A549 (cell line): ENCODE measurements at regions of chr14 and their contacts with region 1.

Region 1: GRCh38 chr14:64636208-64636979 is 67.8 kb upstream of the PLEKHG3 start:
- DNase-seq: peak; percentile 74 to 84
- ATAC-seq: peak; percentile 90 to 93
- H3K4me3 ChIP-seq: no peak overlapping the region
- H3K27ac ChIP-seq: peak overlapping the region; percentile 62 to 83
- H3K4me1 ChIP-seq: peaks cover 42% of the 10 kb centered on the region
- CTCF ChIP-seq: peak; percentile 93
- EP300 ChIP-seq: no peak
- POLR2A ChIP-seq: no peak
- RAD21 ChIP-seq: peak; percentile 83 to 94

Region 2: DNA sequence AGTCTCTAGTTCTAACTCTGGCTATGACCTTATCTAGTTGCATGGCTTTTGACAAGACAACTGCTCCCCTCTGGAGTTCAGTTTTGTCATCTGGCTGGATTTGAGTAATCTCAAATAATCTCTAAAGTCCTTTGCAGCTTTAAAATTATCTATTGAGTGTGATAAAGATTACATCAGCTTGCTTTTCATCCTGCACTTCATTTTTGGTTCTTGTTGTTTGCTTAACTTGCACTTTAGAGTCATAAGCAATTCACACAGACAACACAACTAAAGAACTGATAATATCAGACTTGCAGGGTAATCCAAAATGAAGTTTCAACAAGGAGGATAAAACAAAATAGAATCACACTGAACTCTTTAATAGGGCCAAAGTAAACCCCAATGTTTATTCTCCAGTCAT is 168.8 kb before region 1 on chr14:
- CTCF ChIA-PET with region 1: no interaction called
- POLR2A ChIA-PET with region 1: no interaction called
- DNase-seq: no peak
- ATAC-seq: no peak
- H3K4me3 ChIP-seq: no peak overlapping the region
- H3K27ac ChIP-seq: no peak overlapping the region
- H3K4me1 ChIP-seq: peaks cover 25% of the 10 kb centered on the region; the same call in 2 of the 3 replicates
- CTCF ChIP-seq: no peak
- EP300 ChIP-seq: no peak
- POLR2A ChIP-seq: no peak
- RAD21 ChIP-seq: no peak

Region 3: GRCh38 chr14:64510825-64511671 is 125.3 kb before region 1 on chr14:
- CTCF ChIA-PET with region 1: interaction called, 13 read pairs
- POLR2A ChIA-PET with region 1: no interaction called
- DNase-seq: peak; percentile 32 to 76
- ATAC-seq: peak; percentile 81 to 83; a peak in 5 of 6 replicates
- H3K4me3 ChIP-seq: no peak overlapping the region
- H3K27ac ChIP-seq: peak overlapping the region; percentile 34 to 71
- H3K4me1 ChIP-seq: peaks cover 75% of the 10 kb centered on the region
- CTCF ChIP-seq: peak; percentile 96
- EP300 ChIP-seq: no peak
- POLR2A ChIP-seq: no peak
- RAD21 ChIP-seq: peak; percentile 53

Region 4: GRCh38 chr14:64540208-64541157 is 95.9 kb before region 1 on chr14 and contains the start of gene HSPA2:
- CTCF ChIA-PET with region 1: interaction called, 182 read pairs
- POLR2A ChIA-PET with region 1: interaction called, 68 read pairs
- DNase-seq: peak; percentile 97 to 100
- ATAC-seq: peak; percentile 95 to 96
- H3K4me3 ChIP-seq: peak within 1 kb of the TSS; percentile 62
- H3K27ac ChIP-seq: peak within 1 kb of the TSS; percentile 95 to 96
- H3K4me1 ChIP-seq: peaks cover 33% of the 10 kb centered on the region; the same call in 2 of the 3 replicates
- CTCF ChIP-seq: peak; percentile 80
- EP300 ChIP-seq: no peak
- POLR2A ChIP-seq: peak; percentile 100
- RAD21 ChIP-seq: peak; percentile 76 to 88
- polyA plus RNA-seq, gene HSPA2: 50.0 and 59.9 TPM in 2 replicates

Region 5: GRCh38 chr14:64556526-64556925 is 79.9 kb before region 1 on chr14:
- CTCF ChIA-PET with region 1: interaction called, 19 read pairs
- POLR2A ChIA-PET with region 1: no interaction called
- DNase-seq: peak in 1 of 2 experiments; percentile 44
- ATAC-seq: peak; percentile 50 to 52; a peak in 2 of 6 replicates
- H3K4me3 ChIP-seq: no peak overlapping the region
- H3K27ac ChIP-seq: peak overlapping the region in 1 of 2 experiments; percentile 50; a peak in 1 of 6 replicates
- H3K4me1 ChIP-seq: peaks cover 2% of the 10 kb centered on the region; the same call in 1 of the 3 replicates
- CTCF ChIP-seq: no peak
- EP300 ChIP-seq: no peak
- POLR2A ChIP-seq: no peak
- RAD21 ChIP-seq: no peak

Region 6: DNA sequence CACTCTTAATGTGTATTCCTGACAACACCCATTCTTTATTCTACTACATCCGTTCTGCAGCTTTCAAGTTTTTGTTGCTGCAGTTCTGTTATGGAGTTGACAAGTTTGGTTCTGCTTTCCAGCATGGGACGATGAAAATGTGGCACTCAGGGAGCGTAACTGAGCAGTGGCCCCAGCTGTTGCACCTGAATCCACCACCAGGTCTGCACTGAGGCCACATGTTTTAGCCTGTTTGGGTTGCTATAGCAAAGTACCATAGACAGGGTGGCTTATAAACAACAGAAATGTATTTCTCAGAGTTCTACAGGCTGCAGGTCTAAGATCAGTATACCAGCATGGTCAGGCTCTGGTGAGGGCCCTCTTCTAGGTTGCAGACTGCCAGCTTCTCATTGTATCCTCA is 59.6 kb before region 1 on chr14:
- CTCF ChIA-PET with region 1: interaction called, 14 read pairs
- POLR2A ChIA-PET with region 1: no interaction called
- DNase-seq: no peak
- ATAC-seq: peak in 1 of 2 experiments; percentile 42; a peak in 3 of 6 replicates
- H3K4me3 ChIP-seq: no peak overlapping the region
- H3K27ac ChIP-seq: no peak overlapping the region
- H3K4me1 ChIP-seq: peaks cover 4% of the 10 kb centered on the region; the same call in 1 of the 3 replicates
- CTCF ChIP-seq: no peak
- EP300 ChIP-seq: no peak
- POLR2A ChIP-seq: no peak
- RAD21 ChIP-seq: no peak

Region 7: GRCh38 chr14:64654246-64654900 is 18.0 kb after region 1 on chr14:
- CTCF ChIA-PET with region 1: interaction called, 27 read pairs
- POLR2A ChIA-PET with region 1: no interaction called
- DNase-seq: peak; percentile 51 to 78
- ATAC-seq: peak; percentile 75 to 86
- H3K4me3 ChIP-seq: no peak overlapping the region
- H3K27ac ChIP-seq: peak overlapping the region; percentile 65 to 93
- H3K4me1 ChIP-seq: peaks cover 28% of the 10 kb centered on the region
- CTCF ChIP-seq: no peak
- EP300 ChIP-seq: no peak
- POLR2A ChIP-seq: no peak
- RAD21 ChIP-seq: no peak

Region 8: DNA sequence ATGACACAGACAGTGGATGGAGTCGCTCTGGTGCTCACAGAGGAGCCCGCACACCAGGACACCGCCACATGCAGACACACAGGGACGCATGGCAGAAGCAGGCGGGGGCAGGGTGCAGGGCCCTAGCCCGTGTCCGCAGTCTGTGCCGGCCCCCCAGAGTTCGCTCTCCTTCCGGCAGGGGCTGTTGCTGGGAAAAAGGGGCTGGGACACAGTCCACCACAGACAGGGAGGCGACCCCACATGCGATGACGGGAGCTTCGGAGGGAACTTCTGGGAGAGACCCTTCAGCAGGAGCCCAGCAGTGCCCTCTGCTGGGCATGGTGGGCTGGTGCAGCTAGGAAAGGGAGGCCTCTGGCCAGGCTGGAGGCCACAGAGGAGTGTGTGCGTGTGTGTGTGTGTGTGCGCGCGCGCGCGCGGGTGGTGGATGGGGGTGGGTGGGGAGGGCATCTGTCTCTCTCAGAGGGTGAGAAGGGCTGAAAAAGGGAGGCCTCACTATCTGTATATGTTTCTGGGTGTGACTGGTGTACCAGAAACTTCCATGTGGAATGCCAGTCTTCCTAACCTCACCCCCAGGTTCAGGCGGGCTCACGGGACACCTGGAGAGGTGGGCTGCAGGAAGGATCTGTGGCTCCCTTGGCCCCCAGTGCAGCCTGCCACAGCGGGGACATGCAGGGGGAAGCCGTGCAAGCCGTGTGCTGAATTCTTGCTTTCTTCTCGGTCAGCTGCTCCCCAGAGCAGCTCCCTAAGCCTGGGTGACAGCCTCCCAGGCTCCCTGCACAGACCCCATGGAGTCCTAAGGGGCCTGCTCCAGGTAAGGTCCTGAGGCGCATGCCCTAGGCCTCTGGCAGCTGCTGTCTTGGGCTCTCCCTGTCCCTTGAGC is 128.5 kb after region 1 on chr14:
- CTCF ChIA-PET with region 1: interaction called, 12 read pairs
- POLR2A ChIA-PET with region 1: no interaction called
- DNase-seq: peak; percentile 76 to 83
- ATAC-seq: peak; percentile 21 to 70; a peak in 4 of 6 replicates
- H3K4me3 ChIP-seq: 0 out of 3 replicates have a peak overlapping the region, but pooled peaks have one; percentile 24
- H3K27ac ChIP-seq: peak overlapping the region; percentile 92 to 93
- H3K4me1 ChIP-seq: peaks cover 64% of the 10 kb centered on the region
- CTCF ChIP-seq: peak; percentile 88
- EP300 ChIP-seq: no peak
- POLR2A ChIP-seq: no peak
- RAD21 ChIP-seq: peak; percentile 88 to 92